CD4-positive, alpha-beta T cell (primary cell): ENCODE measurements at regions of chr21 and their contacts with region 1.

Region 1: GRCh38 chr21:42145569-42146272 is 73.2 kb upstream of the ABCG1 start:
- DNase-seq: peak; percentile 47 to 86 (median 59)
- ATAC-seq: peak; percentile 91
- H3K4me3 ChIP-seq: no peak overlapping the region
- H3K4me3 Mint-ChIP-seq: no peak overlapping the region
- H3K27ac ChIP-seq: no peak overlapping the region
- H3K27ac Mint-ChIP-seq: no peak overlapping the region
- H3K4me1 ChIP-seq: peaks cover 7% of the 10 kb centered on the region
- H3K4me1 Mint-ChIP-seq: peaks cover 9% of the 10 kb centered on the region
- H3K27me3 ChIP-seq: no peaks in the 10 kb centered on the region
- H3K27me3 Mint-ChIP-seq: no peaks in the 10 kb centered on the region
- CTCF ChIP-seq: peak; percentile 91

Region 2: DNA sequence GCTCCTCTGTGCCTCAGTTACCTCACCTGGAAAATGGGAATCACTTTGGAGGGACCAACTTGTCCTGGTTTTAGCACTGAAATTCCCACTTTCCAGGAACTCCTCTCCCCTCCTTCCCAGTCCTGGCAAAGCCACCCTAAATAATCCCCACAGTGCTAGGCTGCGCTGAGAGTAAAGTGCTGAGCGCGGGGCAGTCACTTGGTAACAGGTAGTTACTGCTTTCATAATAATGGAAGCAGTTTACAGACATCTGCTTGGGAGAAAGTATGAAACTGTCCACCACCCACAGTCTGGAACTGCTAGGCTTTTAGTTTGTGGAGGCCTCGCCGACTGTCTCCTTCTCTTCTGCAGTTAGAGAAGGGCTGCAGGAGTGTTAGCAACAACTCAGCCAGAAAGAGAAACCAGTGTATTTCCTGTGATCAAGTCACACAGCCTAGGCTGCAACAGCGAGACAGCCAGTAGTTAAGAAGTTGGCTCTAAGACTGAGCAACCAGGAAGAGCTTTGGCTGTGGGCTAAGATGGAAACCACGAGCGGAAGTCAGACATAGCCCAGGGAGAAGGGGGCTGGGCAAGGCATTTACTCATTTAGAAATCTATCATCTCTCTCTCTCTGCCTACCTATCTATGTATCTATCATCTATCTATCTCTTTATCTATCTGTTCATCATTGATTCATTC is 42.4 kb after region 1 on chr21:
- CTCF ChIA-PET with region 1: interaction called, 7 read pairs
- POLR2A ChIA-PET with region 1: no interaction called
- intact Hi-C with region 1: loop called in 1 of 2 experiments (anchors 5 kb)
- DNase-seq: peak; percentile 61 to 94 (median 76)
- ATAC-seq: peak; percentile 90
- H3K4me3 ChIP-seq: peak overlapping the region; percentile 21
- H3K4me3 Mint-ChIP-seq: peak overlapping the region; percentile 74
- H3K27ac ChIP-seq: peak overlapping the region; percentile 83 to 88
- H3K27ac Mint-ChIP-seq: no peak overlapping the region
- H3K4me1 ChIP-seq: peaks cover 89% of the 10 kb centered on the region
- H3K4me1 Mint-ChIP-seq: peaks cover 73% of the 10 kb centered on the region
- H3K27me3 ChIP-seq: no peaks in the 10 kb centered on the region
- H3K27me3 Mint-ChIP-seq: no peaks in the 10 kb centered on the region
- CTCF ChIP-seq: no peak

Region 3: GRCh38 chr21:42199488-42200458 is 54.1 kb after region 1 on chr21:
- CTCF ChIA-PET with region 1: no interaction called
- POLR2A ChIA-PET with region 1: no interaction called
- intact Hi-C with region 1: loop called in 1 of 2 experiments (anchors 2 kb)
- DNase-seq: peak in 5 of 14 experiments; percentile 30 to 77 (median 71)
- ATAC-seq: peak; percentile 84
- H3K4me3 ChIP-seq: no peak overlapping the region
- H3K4me3 Mint-ChIP-seq: peak overlapping the region; percentile 31
- H3K27ac ChIP-seq: peak overlapping the region in 1 of 2 donors; percentile 64
- H3K27ac Mint-ChIP-seq: peak overlapping the region; percentile 94
- H3K4me1 ChIP-seq: peaks cover 33% of the 10 kb centered on the region
- H3K4me1 Mint-ChIP-seq: peaks cover 71% of the 10 kb centered on the region
- H3K27me3 ChIP-seq: no peaks in the 10 kb centered on the region
- H3K27me3 Mint-ChIP-seq: no peaks in the 10 kb centered on the region
- CTCF ChIP-seq: no peak

Region 4: GRCh38 chr21:42238185-42238934 is 92.6 kb after region 1 on chr21:
- CTCF ChIA-PET with region 1: interaction called, 12 read pairs
- POLR2A ChIA-PET with region 1: no interaction called
- intact Hi-C with region 1: no loop called
- DNase-seq: peak in 13 of 14 experiments; percentile 13 to 90 (median 43)
- ATAC-seq: peak; percentile 35
- H3K4me3 ChIP-seq: peak overlapping the region; percentile 25
- H3K4me3 Mint-ChIP-seq: peak overlapping the region; percentile 76
- H3K27ac ChIP-seq: peak overlapping the region; percentile 83 to 94
- H3K27ac Mint-ChIP-seq: peak overlapping the region; percentile 90
- H3K4me1 ChIP-seq: peaks cover 80% of the 10 kb centered on the region
- H3K4me1 Mint-ChIP-seq: peaks cover 76% of the 10 kb centered on the region
- H3K27me3 ChIP-seq: no peaks in the 10 kb centered on the region
- H3K27me3 Mint-ChIP-seq: no peaks in the 10 kb centered on the region
- CTCF ChIP-seq: no peak

Region 5: GRCh38 chr21:42449296-42449927 is 303.7 kb after region 1 on chr21:
- CTCF ChIA-PET with region 1: interaction called, 4 read pairs
- POLR2A ChIA-PET with region 1: interaction called, 3 read pairs
- intact Hi-C with region 1: loop called (anchors 1 to 2 kb)
- DNase-seq: no peak
- ATAC-seq: no peak
- H3K4me3 ChIP-seq: no peak overlapping the region
- H3K4me3 Mint-ChIP-seq: no peak overlapping the region
- H3K27ac ChIP-seq: peak overlapping the region; percentile 4 to 14
- H3K27ac Mint-ChIP-seq: peak overlapping the region; percentile 95
- H3K4me1 ChIP-seq: peaks cover 26% of the 10 kb centered on the region
- H3K4me1 Mint-ChIP-seq: peaks cover 41% of the 10 kb centered on the region
- H3K27me3 ChIP-seq: no peaks in the 10 kb centered on the region
- H3K27me3 Mint-ChIP-seq: no peaks in the 10 kb centered on the region
- CTCF ChIP-seq: no peak

Region 6: DNA sequence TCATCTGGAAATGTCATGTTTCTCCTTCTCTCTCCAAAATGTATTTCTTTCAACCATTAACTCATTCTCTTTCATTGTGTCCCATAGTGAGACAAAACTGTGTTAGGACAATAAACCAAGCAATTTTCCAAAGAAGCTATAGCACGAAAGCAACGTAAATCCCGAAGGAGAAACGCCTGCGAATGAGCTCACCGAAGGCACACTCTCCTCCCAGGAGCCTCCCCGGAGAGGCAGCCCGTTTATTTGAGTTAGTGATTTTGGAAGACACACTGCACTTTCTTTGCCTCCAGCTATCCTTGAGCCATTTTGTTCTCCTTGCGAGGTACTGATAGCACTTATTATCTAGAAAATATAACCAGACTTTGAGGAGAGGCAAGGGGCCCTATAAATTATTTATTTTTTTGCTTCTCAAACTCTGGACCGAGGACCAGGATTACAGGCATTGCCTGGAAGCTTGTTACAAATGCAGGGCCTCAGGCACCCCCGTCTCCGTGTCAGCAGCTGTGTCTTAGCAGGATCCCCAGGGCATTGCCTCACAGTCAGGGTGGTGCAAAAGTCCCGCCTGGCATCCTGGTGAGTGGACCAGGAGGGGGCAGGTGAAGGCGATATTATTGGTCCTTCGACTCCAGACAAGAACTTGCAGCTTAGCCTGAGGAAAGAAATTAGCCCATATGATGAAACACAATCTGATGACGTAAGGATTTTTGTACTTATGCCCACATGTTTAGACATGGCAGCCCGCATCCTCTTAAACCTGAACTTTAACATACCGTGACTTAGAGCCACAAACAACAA is 309.3 kb after region 1 on chr21:
- CTCF ChIA-PET with region 1: interaction called, 4 read pairs
- POLR2A ChIA-PET with region 1: interaction called, 3 read pairs
- intact Hi-C with region 1: loop called in 1 of 2 experiments (anchors 1 kb)
- DNase-seq: no peak
- ATAC-seq: no peak
- H3K4me3 ChIP-seq: no peak overlapping the region
- H3K4me3 Mint-ChIP-seq: no peak overlapping the region
- H3K27ac ChIP-seq: no peak overlapping the region
- H3K27ac Mint-ChIP-seq: peak overlapping the region; percentile 79
- H3K4me1 ChIP-seq: peaks cover 25% of the 10 kb centered on the region
- H3K4me1 Mint-ChIP-seq: peaks cover 32% of the 10 kb centered on the region
- H3K27me3 ChIP-seq: no peaks in the 10 kb centered on the region
- H3K27me3 Mint-ChIP-seq: no peaks in the 10 kb centered on the region
- CTCF ChIP-seq: no peak